MCF 10A (cell line): ENCODE measurements at regions of chr11 and their contacts with region 1.

Region 1: GRCh38 chr11:83241291-83241946 is 44.7 kb downstream of the CCDC90B start:
- DNase-seq: peak; percentile 80
- H3K4me3 Mint-ChIP-seq: no peak overlapping the region
- H3K27ac Mint-ChIP-seq: no peak overlapping the region
- H3K4me1 Mint-ChIP-seq: no peaks in the 10 kb centered on the region
- H3K27me3 Mint-ChIP-seq: no peaks in the 10 kb centered on the region
- CTCF ChIP-seq: peak; percentile 47

Region 2: GRCh38 chr11:83724008-83724461 is 482.6 kb after region 1 on chr11:
- CTCF ChIA-PET with region 1: no interaction called
- POLR2A ChIA-PET with region 1: no interaction called
- intact Hi-C with region 1: loop called (anchors 2 kb)
- DNase-seq: peak; percentile 54
- H3K4me3 Mint-ChIP-seq: peak overlapping the region; percentile 51
- H3K27ac Mint-ChIP-seq: no peak overlapping the region
- H3K4me1 Mint-ChIP-seq: peaks cover 5% of the 10 kb centered on the region
- H3K27me3 Mint-ChIP-seq: peaks cover 53% of the 10 kb centered on the region
- CTCF ChIP-seq: peak; percentile 38